Dorsolateral prefrontal cortex (tissue), 120 donors: ENCODE measurements at regions of chr2 and their contacts with region 1.

Region 1: DNA sequence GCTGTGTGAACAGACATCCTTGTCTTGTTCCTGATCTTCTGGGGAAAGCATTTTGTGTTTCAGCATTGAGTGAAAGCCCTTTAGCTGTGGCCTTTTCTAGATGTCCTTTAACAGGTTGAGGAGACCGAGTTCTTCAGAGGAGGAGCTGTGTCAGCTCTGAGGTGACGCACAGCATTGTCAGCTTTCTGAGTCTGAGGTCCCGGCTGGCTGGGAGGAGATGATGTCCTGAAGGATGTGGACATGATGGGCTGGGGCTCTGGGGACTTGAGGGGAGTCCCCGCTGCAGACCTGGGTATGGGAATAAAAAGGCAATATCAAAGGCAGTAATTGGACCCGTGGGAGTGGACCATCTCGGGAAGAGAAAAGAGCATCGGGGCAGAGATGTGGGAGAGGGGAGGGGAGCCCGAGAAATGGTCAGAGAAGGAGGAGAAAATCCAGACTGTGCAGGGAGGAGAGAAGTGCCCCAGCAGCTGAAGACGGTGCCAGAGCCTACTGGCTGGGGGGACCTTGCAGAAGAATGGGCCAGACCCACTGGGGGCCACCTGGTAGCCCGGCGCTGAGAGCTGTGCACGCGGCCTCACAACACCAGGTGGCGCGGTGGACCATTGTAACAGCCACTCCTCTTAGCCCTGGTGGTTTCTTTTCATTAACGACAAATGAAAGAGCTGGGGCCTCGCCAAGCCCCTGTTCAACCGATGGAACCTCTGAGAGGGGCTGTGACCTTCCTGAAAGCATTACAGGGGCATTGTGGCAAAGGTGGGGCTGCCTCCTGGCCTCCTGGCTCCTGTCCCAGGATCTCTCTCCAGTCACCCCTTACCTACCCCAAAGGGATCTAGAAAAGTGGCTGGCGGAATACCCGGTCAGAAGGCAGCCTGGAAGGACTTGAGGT is 61.6 kb downstream of the ST3GAL5 start:
- DNase-seq: peak; percentile 65 to 83 (median 78)
- H3K4me3 ChIP-seq: peak overlapping the region in 53 of 59 donors; percentile 0 to 62 (median 37)
- H3K27ac ChIP-seq: peak overlapping the region in 2 of 59 donors; percentile 23 to 29
- H3K27me3 ChIP-seq: no peaks in the 10 kb centered on the region
- CTCF ChIP-seq: peak; percentile 64 to 99 (median 95)

Region 2: GRCh38 chr2:85504778-85505323 is 322.4 kb before region 1 on chr2:
- intact Hi-C with region 1: no loop called
- DNase-seq: peak in 1 of 10 donors; percentile 41
- H3K4me3 ChIP-seq: no peak overlapping the region
- H3K27ac ChIP-seq: peak overlapping the region in 1 of 59 donors; percentile 9
- H3K27me3 ChIP-seq: no peaks in the 10 kb centered on the region
- CTCF ChIP-seq: no peak

Region 3: GRCh38 chr2:85911814-85912692 is 84.8 kb after region 1 on chr2:
- intact Hi-C with region 1: no loop called
- DNase-seq: no peak
- H3K4me3 ChIP-seq: no peak overlapping the region
- H3K27ac ChIP-seq: peak overlapping the region; percentile 14 to 100 (median 77)
- H3K27me3 ChIP-seq: no peaks in the 10 kb centered on the region
- CTCF ChIP-seq: no peak

Region 4: DNA sequence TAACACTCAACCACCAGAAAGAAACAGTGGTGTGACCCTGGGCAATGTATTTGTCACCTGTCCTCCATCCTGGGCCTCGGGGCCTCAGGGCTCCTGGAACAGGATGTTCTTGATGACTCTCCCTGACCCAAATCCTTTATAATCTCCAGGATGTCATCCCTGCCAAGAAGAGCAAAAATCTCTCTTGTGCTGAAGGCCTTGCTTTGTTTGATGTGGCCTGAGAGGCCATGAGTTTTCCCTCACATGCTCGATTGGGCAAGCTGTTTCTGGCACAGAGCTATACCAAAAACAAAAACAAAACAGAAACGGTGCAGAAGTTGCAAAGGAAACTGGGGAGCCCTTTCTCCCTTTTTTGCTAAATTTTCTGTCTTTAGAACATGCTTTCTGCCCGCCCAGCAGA is 97.3 kb after region 1 on chr2:
- intact Hi-C with region 1: loop called in 1 of 2 experiments (anchors 5 kb)
- DNase-seq: peak in 2 of 10 donors; percentile 34 to 42
- H3K4me3 ChIP-seq: peak overlapping the region in 1 of 59 donors; percentile 14
- H3K27ac ChIP-seq: peak overlapping the region; percentile 71 to 99 (median 95)
- H3K27me3 ChIP-seq: no peaks in the 10 kb centered on the region
- CTCF ChIP-seq: peak in 2 of 56 donors; percentile 17 to 18